PC-3 (cell line): ENCODE measurements at regions of chr18 and their contacts with region 1.

Region 1: GRCh38 chr18:7272311-7273049 is 41.6 kb downstream of the LRRC30 start:
- DNase-seq: peak; percentile 88
- ATAC-seq: peak; percentile 76
- H3K4me3 ChIP-seq: no peak overlapping the region
- H3K27ac ChIP-seq: no peak overlapping the region
- H3K4me1 ChIP-seq: peaks cover 18% of the 10 kb centered on the region
- H3K27me3 ChIP-seq: peaks cover 2% of the 10 kb centered on the region; the same call in 1 of the 2 replicates
- CTCF ChIP-seq: peak; percentile 69

Region 2: GRCh38 chr18:7164323-7165004 is 108.0 kb before region 1 on chr18:
- CTCF ChIA-PET with region 1: no interaction called
- POLR2A ChIA-PET with region 1: no interaction called
- intact Hi-C with region 1: no loop called
- DNase-seq: peak; percentile 33
- ATAC-seq: peak; percentile 51
- H3K4me3 ChIP-seq: no peak overlapping the region
- H3K27ac ChIP-seq: no peak overlapping the region
- H3K4me1 ChIP-seq: peaks cover 7% of the 10 kb centered on the region
- H3K27me3 ChIP-seq: peaks cover 23% of the 10 kb centered on the region
- CTCF ChIP-seq: peak; percentile 63

Region 3: DNA sequence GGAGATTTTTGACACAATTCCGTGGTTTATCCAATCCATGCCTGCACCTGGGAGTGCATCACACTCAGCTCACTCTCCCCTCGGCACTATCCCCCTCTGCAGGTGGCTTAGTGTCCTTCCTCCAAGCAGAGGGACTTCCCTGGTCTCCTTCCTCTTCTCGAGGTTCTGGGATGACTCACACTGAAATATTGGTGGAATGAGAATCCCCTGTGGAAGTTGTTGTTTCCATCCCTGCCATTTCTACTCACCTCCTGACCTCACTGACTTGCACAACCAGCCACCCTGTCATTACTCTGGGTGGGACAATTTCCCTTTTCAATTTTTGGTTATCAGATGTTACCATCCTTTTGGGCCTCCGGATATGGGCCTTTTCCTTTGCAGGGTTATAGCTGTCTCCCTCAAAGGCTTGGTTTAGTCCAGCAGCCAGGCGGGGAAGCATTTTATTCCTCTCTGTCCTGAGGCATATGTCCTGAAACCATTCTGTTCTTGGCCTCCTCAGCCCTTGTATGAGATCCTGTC is 354.5 kb after region 1 on chr18:
- CTCF ChIA-PET with region 1: interaction called, 3 read pairs
- POLR2A ChIA-PET with region 1: no interaction called
- intact Hi-C with region 1: loop called (anchors 5 kb)
- DNase-seq: peak; percentile 88
- ATAC-seq: peak; percentile 97
- H3K4me3 ChIP-seq: no peak overlapping the region
- H3K27ac ChIP-seq: no peak overlapping the region
- H3K4me1 ChIP-seq: peaks cover 19% of the 10 kb centered on the region
- H3K27me3 ChIP-seq: no peaks in the 10 kb centered on the region
- CTCF ChIP-seq: peak; percentile 64

Region 4: GRCh38 chr18:7755753-7756475 is 483.4 kb after region 1 on chr18:
- CTCF ChIA-PET with region 1: no interaction called
- POLR2A ChIA-PET with region 1: no interaction called
- intact Hi-C with region 1: loop called (anchors 10 kb)
- DNase-seq: no peak
- ATAC-seq: peak; percentile 30; the same call in 1 of the 2 replicates
- H3K4me3 ChIP-seq: no peak overlapping the region
- H3K27ac ChIP-seq: no peak overlapping the region
- H3K4me1 ChIP-seq: peaks cover 15% of the 10 kb centered on the region
- H3K27me3 ChIP-seq: no peaks in the 10 kb centered on the region
- CTCF ChIP-seq: peak; percentile 31; the same call in 1 of the 2 replicates

Region 5: GRCh38 chr18:7850446-7850845 is 578.0 kb after region 1 on chr18:
- CTCF ChIA-PET with region 1: no interaction called
- POLR2A ChIA-PET with region 1: no interaction called
- intact Hi-C with region 1: loop called (anchors 5 kb)
- DNase-seq: no peak
- ATAC-seq: no peak
- H3K4me3 ChIP-seq: no peak overlapping the region
- H3K27ac ChIP-seq: no peak overlapping the region
- H3K4me1 ChIP-seq: 0 out of 2 replicates have a peak, but pooled peaks cover 5% of the 10 kb centered on the region
- H3K27me3 ChIP-seq: no peaks in the 10 kb centered on the region
- CTCF ChIP-seq: no peak

Region 6: DNA sequence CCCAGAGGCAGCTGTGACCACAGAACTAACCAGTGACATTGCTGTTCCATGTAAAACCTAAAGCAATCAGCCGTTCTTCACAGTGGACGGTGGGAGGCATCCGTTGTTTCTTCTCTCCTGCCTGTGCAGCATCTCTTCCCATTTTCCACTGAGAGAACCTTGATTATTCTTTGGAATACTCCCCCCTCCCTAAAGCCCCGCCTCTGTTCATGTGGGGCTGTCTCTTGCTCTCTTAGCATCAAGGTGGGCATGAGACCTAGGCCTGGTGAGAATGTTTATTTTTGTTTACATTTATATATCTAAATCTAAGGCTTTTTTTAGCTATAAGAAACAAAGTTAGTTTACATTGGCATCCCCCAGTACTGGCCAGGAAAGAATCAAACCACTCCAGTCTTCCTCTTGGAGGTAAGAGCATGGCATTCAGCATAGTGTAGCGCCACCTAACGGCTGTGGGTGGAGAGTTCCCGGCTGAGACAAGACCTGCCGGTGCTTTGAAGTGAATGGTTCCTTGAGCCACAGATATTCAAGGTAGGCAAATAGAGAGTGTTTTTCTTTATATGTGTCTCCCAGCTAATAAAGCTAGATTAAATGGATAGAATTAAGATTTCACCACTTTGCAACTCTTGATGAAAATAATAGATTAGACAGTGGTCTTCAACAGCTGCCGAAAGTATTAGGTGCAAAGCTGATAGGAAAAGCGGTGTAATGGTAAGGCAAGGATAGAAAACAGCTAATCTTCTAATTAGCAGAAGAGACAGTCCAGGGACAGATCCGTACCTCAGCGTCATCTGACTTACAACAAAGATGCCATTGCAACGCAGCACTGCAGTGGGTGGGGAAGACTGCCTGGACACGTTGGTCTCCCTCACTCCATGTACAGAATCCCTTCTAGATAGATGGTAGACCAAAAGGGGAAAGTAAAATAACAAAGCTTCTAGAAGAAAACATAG is 1117.2 kb after region 1 on chr18:
- CTCF ChIA-PET with region 1: no interaction called
- POLR2A ChIA-PET with region 1: no interaction called
- intact Hi-C with region 1: loop called (anchors 10 kb)
- DNase-seq: peak; percentile 86
- ATAC-seq: peak; percentile 100
- H3K4me3 ChIP-seq: no peak overlapping the region
- H3K27ac ChIP-seq: no peak overlapping the region
- H3K4me1 ChIP-seq: no peaks in the 10 kb centered on the region
- H3K27me3 ChIP-seq: no peaks in the 10 kb centered on the region
- CTCF ChIP-seq: peak; percentile 97